ENCODE measurements at regions of chr10 and their contacts with region 1.

Region 1: DNA sequence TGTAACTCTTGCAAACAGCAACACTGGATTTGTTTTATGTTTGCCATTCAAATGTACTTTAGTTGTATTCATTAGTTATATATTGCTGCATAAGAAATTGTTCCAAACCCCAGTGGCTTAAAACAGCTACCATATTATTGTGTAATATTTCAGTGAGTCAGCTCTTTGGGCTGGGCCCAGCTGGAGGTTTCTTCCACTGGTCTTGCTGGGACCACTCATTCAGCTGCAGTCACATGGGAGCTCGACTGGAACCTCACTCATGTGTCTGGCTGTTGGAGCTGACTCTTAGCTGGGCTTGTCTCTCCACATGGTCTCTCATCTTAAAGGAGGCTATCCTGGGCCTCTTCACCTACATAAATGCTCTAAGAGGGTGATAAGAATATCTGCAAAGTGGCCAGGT is 23.2 kb upstream of the PIP4K2A start:
- DNase-seq: peak; percentile 65
- ATAC-seq: no peak
- H3K4me3 ChIP-seq: no peak overlapping the region
- H3K27ac ChIP-seq: peak overlapping the region; percentile 42
- H3K4me1 ChIP-seq: peaks cover 21% of the 10 kb centered on the region
- H3K27me3 ChIP-seq: no peaks in the 10 kb centered on the region
- CTCF ChIP-seq: no peak

Region 2: DNA sequence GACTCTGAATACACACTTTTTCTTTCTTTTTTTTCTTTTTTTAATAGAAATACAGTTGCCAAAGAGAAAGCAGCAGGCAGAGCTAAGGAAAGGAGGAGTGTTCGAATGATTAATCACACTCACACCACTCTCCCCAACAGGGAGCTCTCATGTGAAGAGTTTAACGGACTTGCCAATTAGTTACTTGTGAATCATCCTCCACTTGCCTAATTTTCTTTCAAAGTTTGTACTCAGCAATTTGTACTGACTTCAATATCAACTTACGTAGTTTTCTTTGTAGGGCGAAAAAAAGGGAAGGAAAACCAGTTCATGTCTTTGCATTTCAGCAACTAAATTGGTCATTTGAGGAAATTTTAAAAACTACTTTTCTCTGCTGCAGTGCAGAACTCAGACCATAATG is 132.4 kb before region 1 on chr10:
- CTCF ChIA-PET with region 1: no interaction called
- POLR2A ChIA-PET with region 1: interaction called, 15 read pairs
- intact Hi-C with region 1: no loop called
- DNase-seq: no peak
- ATAC-seq: no peak
- H3K4me3 ChIP-seq: no peak overlapping the region
- H3K27ac ChIP-seq: no peak overlapping the region
- H3K4me1 ChIP-seq: peaks cover 20% of the 10 kb centered on the region
- H3K27me3 ChIP-seq: no peaks in the 10 kb centered on the region
- CTCF ChIP-seq: no peak

Region 3: GRCh38 chr10:22791655-22792054 is 54.1 kb after region 1 on chr10:
- CTCF ChIA-PET with region 1: no interaction called
- POLR2A ChIA-PET with region 1: no interaction called
- intact Hi-C with region 1: no loop called
- DNase-seq: no peak
- ATAC-seq: no peak
- H3K4me3 ChIP-seq: no peak overlapping the region
- H3K27ac ChIP-seq: no peak overlapping the region
- H3K4me1 ChIP-seq: no peaks in the 10 kb centered on the region
- H3K27me3 ChIP-seq: no peaks in the 10 kb centered on the region
- CTCF ChIP-seq: no peak